Activated CD4-positive, alpha-beta T cell treated with anti-CD3 and anti-CD28 coated beads, Interleukin-2, amount 10 ng/mL, durations not matched to agents 24 days and 14 days (primary cell): ENCODE measurements at regions of chr2 and their contacts with region 1.

Region 1: DNA sequence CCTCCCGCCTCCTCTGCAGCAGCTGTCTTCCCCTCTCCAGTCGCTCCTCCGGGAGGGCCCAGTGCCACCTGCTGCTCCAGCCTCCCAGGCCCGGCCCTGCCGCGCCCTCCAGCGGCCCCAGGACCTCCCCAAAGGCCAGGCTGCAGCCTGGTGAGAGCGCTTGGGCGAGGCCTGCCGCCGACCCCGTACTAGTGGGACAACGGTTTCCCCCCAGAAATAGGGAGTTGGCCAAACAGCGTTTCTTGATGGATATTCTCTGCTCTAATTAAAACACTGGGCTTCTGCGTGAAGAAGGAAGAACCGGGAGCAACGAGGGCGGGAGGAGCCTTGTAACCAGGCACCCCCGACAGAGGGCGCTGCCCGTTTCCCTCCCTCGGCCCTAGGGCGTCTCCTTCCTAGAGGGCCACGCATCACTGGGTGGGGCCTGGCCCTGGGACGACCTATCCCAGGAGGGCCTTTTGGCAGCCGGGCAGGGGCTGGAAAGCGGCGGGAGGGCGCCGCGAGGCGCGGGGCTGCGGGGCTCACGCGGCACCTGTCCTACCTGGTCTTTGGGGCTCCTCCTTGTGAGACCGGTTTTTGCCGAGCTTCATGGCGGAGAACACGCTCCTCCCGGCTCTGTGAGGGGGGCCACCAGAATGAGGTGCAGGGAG is 25.4 kb upstream of the OTOF start:
- DNase-seq: peak; percentile 97
- H3K4me3 Mint-ChIP-seq: peak overlapping the region; percentile 85
- H3K27ac Mint-ChIP-seq: peak overlapping the region; percentile 83
- H3K4me1 Mint-ChIP-seq: peaks cover 7% of the 10 kb centered on the region
- H3K27me3 Mint-ChIP-seq: peaks cover 10% of the 10 kb centered on the region

Region 2: GRCh38 chr2:26412091-26412673 is 91.2 kb before region 1 on chr2:
- intact Hi-C with region 1: loop called (anchors 10 kb)
- DNase-seq: peak; percentile 76
- H3K4me3 Mint-ChIP-seq: peak overlapping the region; percentile 65
- H3K27ac Mint-ChIP-seq: peak overlapping the region; percentile 26
- H3K4me1 Mint-ChIP-seq: peaks cover 14% of the 10 kb centered on the region
- H3K27me3 Mint-ChIP-seq: peaks cover 16% of the 10 kb centered on the region

Region 3: DNA sequence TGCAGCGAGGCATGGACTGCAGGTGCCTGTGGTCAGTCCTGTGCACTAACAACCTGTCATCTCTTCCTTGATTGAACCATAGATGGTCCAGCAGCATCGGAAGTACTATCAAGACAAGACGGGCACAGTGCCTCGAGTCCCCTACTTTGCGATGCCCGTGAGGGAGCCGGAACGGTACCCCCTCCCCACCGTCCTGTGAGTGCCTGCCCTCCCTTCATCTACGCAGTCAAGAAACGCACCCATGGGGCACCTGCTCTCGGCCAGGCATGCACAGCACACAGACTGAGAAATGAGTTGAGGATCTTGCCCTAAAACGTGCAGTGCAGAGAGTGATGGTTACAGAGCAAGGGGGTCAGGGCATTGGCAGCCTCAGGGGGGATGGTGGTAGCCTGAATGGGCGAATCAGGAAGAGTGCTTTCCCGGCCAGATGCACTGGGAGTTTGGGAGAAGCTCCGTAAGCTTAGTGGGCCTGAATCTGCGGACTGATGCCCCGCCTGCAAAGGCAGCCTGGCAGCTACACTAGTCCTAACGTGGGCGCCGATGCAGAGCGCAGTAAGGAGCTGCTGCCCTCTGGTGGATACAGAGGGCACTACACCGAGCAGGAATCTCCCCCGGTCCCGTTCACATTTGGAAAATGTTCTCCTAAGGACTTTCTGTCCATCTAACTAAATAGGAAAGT is 74.2 kb after region 1 on chr2:
- intact Hi-C with region 1: loop called (anchors 1 kb)
- DNase-seq: peak; percentile 89
- H3K4me3 Mint-ChIP-seq: no peak overlapping the region
- H3K27ac Mint-ChIP-seq: no peak overlapping the region
- H3K4me1 Mint-ChIP-seq: peaks cover 3% of the 10 kb centered on the region
- H3K27me3 Mint-ChIP-seq: peaks cover 8% of the 10 kb centered on the region

Region 4: GRCh38 chr2:26745609-26746327 is 242.4 kb after region 1 on chr2:
- intact Hi-C with region 1: loop called (anchors 10 kb)
- DNase-seq: peak; percentile 92
- H3K4me3 Mint-ChIP-seq: no peak overlapping the region
- H3K27ac Mint-ChIP-seq: no peak overlapping the region
- H3K4me1 Mint-ChIP-seq: peaks cover under 1% of the 10 kb centered on the region
- H3K27me3 Mint-ChIP-seq: peaks cover 12% of the 10 kb centered on the region